Activated T-helper 1 cell treated with anti-CD3 and anti-CD28 coated beads, Interleukin-12 subunit alpha, Interleukin-12 subunit beta, Interleukin-2, Interleukin-4 antibody, amounts not matched to agents 30 ng/mL and 10 ng/mL and 1 ng/mL, durations not matched to agents 14 hours and 24 hours and 36 hours (primary cell): ENCODE measurements at regions of chr15 and their contacts with region 1.

Region 1: DNA sequence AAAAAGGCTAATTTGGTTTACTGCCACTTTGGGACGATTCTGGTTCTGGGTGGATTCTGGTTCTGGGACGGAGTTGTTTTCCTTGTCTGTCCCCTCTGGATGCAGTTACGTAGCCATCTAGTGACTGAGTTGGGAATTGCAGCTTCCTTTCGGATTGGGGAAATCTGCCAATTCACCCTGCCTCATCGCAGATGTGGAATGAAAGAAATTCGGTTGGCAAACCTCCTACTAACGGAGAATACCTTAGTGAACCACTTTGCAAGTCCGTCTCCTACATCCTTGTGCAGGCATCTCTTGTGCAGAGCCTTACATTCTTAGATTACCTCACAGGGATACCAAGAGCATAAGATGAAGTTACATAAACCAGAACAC is 31.5 kb upstream of the AP4E1 start:
- DNase-seq: peak; percentile 57
- H3K4me3 Mint-ChIP-seq: peak overlapping the region; percentile 58
- H3K27ac Mint-ChIP-seq: peak overlapping the region; percentile 31
- H3K4me1 Mint-ChIP-seq: peaks cover 57% of the 10 kb centered on the region
- H3K27me3 Mint-ChIP-seq: peaks cover 17% of the 10 kb centered on the region

Region 2: DNA sequence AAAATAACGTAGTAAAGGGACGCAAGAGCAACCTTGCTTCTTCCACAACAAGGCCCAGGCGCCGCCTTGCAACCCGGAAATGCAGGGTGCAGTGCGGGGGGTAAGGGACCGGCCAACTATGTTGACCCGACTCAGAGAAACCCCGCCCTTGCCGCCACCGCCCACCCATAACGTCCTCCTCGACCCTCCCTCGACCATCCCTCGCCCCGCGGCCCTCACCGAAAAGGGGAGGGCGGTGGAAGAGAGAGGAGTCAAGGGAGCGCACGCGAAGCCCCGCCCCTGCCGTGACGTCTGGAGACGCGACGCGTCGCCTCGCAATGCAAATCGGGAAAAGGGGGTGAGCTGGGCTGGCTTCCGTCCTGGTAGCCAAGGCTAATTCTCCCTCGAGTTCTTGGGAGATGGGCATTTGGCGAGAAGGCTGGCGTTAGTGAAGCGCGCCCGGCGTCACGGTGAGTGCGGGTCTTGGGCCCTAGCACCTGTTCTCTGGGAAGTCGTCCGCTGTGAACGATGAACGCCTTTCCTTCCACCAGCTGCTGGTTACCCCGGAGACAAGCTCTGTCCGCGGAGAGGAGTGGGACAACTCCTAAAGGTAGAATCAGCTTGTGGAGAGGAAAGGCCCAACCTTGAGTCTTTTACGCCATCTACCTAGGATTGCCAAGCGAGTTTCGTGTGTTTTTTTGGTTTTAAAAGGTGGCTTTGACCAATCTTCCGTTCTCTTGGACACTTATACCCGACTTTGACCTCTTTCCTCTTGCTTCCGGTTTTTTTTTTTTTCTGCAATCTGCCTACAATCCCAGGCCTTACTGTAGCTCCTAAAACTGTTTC is 452.7 kb before region 1 on chr15 and contains the start of gene USP8:
- intact Hi-C with region 1: loop called (anchors 5 kb)
- DNase-seq: peak; percentile 92
- H3K4me3 Mint-ChIP-seq: peak within 1 kb of the TSS; percentile 98
- H3K27ac Mint-ChIP-seq: peak within 1 kb of the TSS; percentile 92
- H3K4me1 Mint-ChIP-seq: peaks cover 25% of the 10 kb centered on the region
- H3K27me3 Mint-ChIP-seq: no peaks in the 10 kb centered on the region
- total RNA-seq, gene USP8: 66.2 and 66.3 TPM in 2 replicates

Region 3: GRCh38 chr15:50627351-50628055 is 249.5 kb before region 1 on chr15:
- intact Hi-C with region 1: loop called (anchors 5 kb)
- DNase-seq: no peak
- H3K4me3 Mint-ChIP-seq: no peak overlapping the region
- H3K27ac Mint-ChIP-seq: peak overlapping the region; percentile 19
- H3K4me1 Mint-ChIP-seq: peaks cover 25% of the 10 kb centered on the region
- H3K27me3 Mint-ChIP-seq: no peaks in the 10 kb centered on the region

Region 4: GRCh38 chr15:50675536-50676144 is 201.3 kb before region 1 on chr15:
- intact Hi-C with region 1: loop called (anchors 1 kb)
- DNase-seq: no peak
- H3K4me3 Mint-ChIP-seq: no peak overlapping the region
- H3K27ac Mint-ChIP-seq: no peak overlapping the region
- H3K4me1 Mint-ChIP-seq: peaks cover 15% of the 10 kb centered on the region
- H3K27me3 Mint-ChIP-seq: no peaks in the 10 kb centered on the region

Region 5: DNA sequence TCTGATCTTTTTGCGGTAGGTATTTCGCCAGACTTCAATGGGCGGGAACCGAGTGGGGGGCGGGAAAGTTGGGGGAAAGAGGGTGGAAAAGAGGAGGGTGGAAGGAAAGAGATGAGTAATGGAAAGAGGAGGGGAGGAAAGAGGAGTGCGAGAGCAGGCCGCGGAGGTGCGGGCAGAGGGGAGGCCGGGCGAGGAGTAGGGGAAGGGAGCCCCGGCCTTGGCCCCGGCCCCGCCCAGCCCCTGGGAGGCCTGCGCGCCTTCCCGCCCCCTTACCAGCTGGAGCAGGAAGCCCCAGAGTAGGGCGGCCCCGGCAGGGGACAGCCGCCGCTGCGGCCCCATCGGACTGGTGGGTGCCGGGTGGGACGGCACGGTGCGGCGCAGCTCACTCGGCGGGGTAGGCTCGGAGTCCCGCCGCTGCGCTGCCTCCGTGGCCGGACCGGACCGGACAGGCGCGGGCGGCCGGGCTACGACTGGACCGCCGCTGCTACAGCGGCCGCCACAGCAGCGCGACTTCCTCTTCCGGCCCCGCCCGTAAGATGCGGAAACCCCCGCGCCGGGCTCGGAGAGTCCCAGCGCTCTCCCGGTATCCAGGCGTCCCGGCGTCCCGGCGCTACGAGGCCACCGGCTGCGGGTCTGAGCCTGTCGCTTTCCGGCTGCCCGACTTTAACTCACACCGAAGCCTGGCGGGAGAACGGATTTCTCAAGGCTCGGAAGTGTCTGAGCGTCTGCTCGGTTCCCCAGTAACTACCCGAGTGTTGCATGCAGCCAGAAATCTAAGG is 111.6 kb before region 1 on chr15 and contains the start of gene SPPL2A:
- intact Hi-C with region 1: loop called (anchors 1 kb)
- DNase-seq: peak; percentile 77
- H3K4me3 Mint-ChIP-seq: peak within 1 kb of the TSS; percentile 96
- H3K27ac Mint-ChIP-seq: peak within 1 kb of the TSS; percentile 97
- H3K4me1 Mint-ChIP-seq: peaks cover 69% of the 10 kb centered on the region
- H3K27me3 Mint-ChIP-seq: no peaks in the 10 kb centered on the region
- total RNA-seq, gene SPPL2A: 100 and 103 TPM in 2 replicates

Region 6: DNA sequence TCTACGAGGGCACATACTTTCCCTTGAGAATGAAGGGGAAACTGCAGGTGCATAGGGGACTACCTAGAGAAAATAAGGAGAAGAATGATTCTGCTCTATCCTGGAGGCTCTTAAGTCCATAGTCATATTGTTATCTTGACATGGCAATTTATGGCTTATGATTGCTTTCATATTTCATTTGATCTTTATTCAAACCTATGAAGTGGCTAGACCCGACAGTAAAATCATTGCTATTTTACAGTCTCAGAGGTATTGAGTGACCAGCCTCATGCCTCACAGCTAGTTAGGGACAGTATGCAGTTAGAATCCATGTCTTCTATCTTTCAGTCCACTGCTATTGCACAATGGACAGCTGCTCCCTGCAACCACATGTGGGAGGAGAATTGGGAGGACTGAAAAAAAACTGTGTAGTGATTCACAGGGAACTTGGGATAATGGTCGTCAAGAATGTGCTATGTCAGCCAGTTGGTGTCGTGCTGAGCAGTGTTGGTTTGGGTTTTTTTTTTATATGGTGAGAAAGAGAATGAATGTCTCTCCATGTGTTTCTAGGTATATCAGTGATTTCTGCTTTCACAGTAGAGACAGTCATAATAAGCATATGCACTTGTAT is 48.3 kb before region 1 on chr15:
- intact Hi-C with region 1: no loop called
- DNase-seq: no peak
- H3K4me3 Mint-ChIP-seq: no peak overlapping the region
- H3K27ac Mint-ChIP-seq: no peak overlapping the region
- H3K4me1 Mint-ChIP-seq: no peaks in the 10 kb centered on the region
- H3K27me3 Mint-ChIP-seq: peaks cover 11% of the 10 kb centered on the region

Region 7: DNA sequence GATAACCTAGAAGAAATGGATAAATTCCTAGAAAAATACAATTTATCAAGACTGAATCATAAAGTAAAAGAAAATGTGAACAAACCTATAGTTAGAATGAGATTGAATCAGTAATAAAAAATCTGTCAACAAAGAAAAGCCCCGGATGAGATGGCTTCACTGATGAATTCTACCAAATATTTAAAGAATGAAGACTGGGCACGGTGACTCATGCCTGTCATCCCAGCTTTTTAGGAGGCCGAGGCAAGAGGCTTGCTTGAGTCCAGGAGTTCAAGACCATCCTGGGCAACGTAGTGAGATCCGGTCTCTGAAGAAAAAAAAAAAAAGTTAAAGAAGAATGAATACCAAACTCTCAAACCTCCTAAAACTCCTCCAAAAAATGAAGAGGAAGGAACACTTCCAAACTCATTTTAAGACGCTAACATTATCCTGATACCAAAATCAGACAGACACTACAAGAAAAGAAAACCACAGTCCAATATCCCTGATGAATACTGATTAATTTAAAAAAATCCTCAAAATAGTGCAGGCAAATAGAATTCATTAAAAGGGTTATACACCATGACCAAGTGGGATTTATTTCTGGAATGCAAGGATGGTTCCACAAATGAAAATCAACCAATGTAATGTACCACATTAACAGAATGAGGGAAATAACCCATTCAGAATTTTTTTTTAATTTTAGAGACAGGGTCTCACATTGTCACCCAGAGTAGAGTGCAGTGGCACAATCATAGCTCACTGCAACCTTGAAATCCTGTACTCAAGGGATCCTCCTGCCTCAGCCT is 14.0 kb after region 1 on chr15:
- intact Hi-C with region 1: no loop called
- DNase-seq: no peak
- H3K4me3 Mint-ChIP-seq: no peak overlapping the region
- H3K27ac Mint-ChIP-seq: no peak overlapping the region
- H3K4me1 Mint-ChIP-seq: peaks cover 10% of the 10 kb centered on the region
- H3K27me3 Mint-ChIP-seq: peaks cover under 1% of the 10 kb centered on the region

Region 8: DNA sequence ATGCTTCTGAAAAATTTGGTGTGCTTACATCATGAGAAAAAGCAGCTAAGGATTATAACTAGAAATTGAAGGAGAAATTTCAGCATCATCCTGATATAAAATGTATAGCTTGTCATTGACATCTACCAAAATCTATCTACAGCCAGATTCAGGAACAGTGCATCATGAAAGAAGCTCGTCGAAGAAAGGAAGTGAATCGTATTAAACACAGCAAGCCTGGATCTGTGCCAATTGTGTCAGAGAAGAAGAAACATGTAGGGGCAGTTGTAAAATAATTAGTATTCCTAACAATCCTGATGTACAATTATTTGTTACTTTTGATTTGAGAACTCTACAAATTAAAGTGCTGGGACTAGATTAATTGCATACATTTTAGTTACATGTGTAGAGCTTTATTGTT is 68.8 kb after region 1 on chr15:
- intact Hi-C with region 1: no loop called
- DNase-seq: no peak
- H3K4me3 Mint-ChIP-seq: no peak overlapping the region
- H3K27ac Mint-ChIP-seq: no peak overlapping the region
- H3K4me1 Mint-ChIP-seq: no peaks in the 10 kb centered on the region
- H3K27me3 Mint-ChIP-seq: no peaks in the 10 kb centered on the region

Region 9: DNA sequence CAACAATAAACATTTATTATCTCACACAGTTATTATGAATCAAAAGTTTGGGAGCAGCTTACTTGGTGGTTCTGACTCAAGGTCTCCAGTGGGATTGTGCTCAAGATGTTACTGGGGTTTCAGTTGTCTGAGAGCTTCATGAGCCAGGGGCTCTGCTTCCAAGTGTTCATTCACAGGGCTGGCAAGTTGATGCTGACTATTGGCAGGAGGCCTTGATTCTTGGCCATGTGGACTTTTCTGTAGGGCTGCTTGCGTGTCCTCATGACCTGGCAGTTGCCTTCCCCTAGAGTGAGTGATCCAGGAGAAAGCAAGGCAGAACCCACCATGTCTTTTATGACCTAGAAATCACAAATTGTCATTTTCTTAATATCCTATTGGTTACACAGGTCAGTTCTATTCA is 304.9 kb after region 1 on chr15:
- intact Hi-C with region 1: no loop called
- DNase-seq: no peak
- H3K4me3 Mint-ChIP-seq: no peak overlapping the region
- H3K27ac Mint-ChIP-seq: no peak overlapping the region
- H3K4me1 Mint-ChIP-seq: no peaks in the 10 kb centered on the region
- H3K27me3 Mint-ChIP-seq: no peaks in the 10 kb centered on the region